Activated B cell treated with CpG ODN at 0.5 μM for 24 hours (primary cell): ENCODE measurements at regions of chr11 and their contacts with region 1.

Region 1: GRCh38 chr11:107413352-107413751 is 44.3 kb downstream of the CWF19L2 start:
- DNase-seq: no peak
- ATAC-seq: no peak
- H3K4me3 Mint-ChIP-seq: no peak overlapping the region
- H3K27ac Mint-ChIP-seq: no peak overlapping the region
- H3K4me1 Mint-ChIP-seq: no peaks in the 10 kb centered on the region
- H3K27me3 Mint-ChIP-seq: no peaks in the 10 kb centered on the region
- CTCF ChIP-seq: no peak

Region 2: GRCh38 chr11:107427569-107428180 is 14.3 kb after region 1 on chr11:
- CTCF ChIA-PET with region 1: no interaction called
- POLR2A ChIA-PET with region 1: no interaction called
- intact Hi-C with region 1: loop called (anchors 2 kb)
- DNase-seq: no peak
- ATAC-seq: no peak
- H3K4me3 Mint-ChIP-seq: no peak overlapping the region
- H3K27ac Mint-ChIP-seq: no peak overlapping the region
- H3K4me1 Mint-ChIP-seq: no peaks in the 10 kb centered on the region
- H3K27me3 Mint-ChIP-seq: no peaks in the 10 kb centered on the region
- CTCF ChIP-seq: no peak

Region 3: DNA sequence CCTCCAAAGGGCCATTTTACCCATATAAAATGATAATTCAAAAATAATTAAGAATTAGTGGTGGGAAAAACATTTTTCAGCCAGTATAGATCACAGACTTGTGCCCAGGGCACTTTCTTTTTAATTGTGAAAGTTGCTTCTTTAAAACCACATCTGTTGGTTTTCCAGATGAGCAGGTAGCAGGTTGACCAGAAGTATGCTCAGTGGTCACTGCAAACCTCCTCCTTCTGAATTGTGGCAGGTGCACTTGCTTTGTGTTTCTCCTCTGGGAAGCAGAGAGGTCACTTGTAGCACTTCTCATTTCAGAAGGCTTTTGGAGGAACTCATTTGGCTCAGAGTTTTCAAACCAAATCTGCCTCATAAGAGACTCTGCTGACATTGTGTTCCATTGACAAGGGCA is 68.9 kb after region 1 on chr11:
- CTCF ChIA-PET with region 1: no interaction called
- POLR2A ChIA-PET with region 1: no interaction called
- intact Hi-C with region 1: no loop called
- DNase-seq: no peak
- ATAC-seq: no peak
- H3K4me3 Mint-ChIP-seq: no peak overlapping the region
- H3K27ac Mint-ChIP-seq: no peak overlapping the region
- H3K4me1 Mint-ChIP-seq: no peaks in the 10 kb centered on the region
- H3K27me3 Mint-ChIP-seq: peaks cover 22% of the 10 kb centered on the region
- CTCF ChIP-seq: no peak

Region 4: GRCh38 chr11:107606141-107606540 is 192.8 kb after region 1 on chr11:
- CTCF ChIA-PET with region 1: no interaction called
- POLR2A ChIA-PET with region 1: no interaction called
- intact Hi-C with region 1: no loop called
- DNase-seq: no peak
- ATAC-seq: no peak
- H3K4me3 Mint-ChIP-seq: no peak overlapping the region
- H3K27ac Mint-ChIP-seq: no peak overlapping the region
- H3K4me1 Mint-ChIP-seq: no peaks in the 10 kb centered on the region
- H3K27me3 Mint-ChIP-seq: peaks cover 35% of the 10 kb centered on the region
- CTCF ChIP-seq: no peak

Region 5: DNA sequence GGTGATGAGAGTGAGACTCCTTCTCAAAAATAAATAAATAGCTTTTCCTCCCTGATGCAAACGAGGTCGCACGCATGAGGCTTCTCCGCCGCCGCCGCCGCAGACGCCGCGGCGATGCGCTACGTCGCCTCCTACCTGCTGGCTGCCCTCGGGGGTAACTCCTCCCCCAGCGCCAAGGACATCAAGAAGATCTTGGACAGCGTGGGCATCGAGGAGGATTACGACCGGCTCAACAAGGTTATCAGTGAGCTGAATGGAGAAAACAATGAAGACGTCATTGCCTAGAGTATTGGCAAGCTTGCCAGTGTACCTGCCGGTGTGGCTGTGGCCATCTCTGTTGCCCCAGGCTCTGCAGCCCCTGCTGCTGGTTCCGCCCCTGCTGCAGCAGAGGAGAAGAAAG is 495.0 kb after region 1 on chr11:
- CTCF ChIA-PET with region 1: no interaction called
- POLR2A ChIA-PET with region 1: no interaction called
- intact Hi-C with region 1: no loop called
- DNase-seq: no peak
- ATAC-seq: no peak
- H3K4me3 Mint-ChIP-seq: no peak overlapping the region
- H3K27ac Mint-ChIP-seq: no peak overlapping the region
- H3K4me1 Mint-ChIP-seq: no peaks in the 10 kb centered on the region
- H3K27me3 Mint-ChIP-seq: peaks cover 5% of the 10 kb centered on the region
- CTCF ChIP-seq: no peak